Activated CD8-positive, alpha-beta T cell treated with anti-CD3 and anti-CD28 coated beads for 36 hours (primary cell): ENCODE measurements at regions of chr12 and their contacts with region 1.

Region 1: GRCh38 chr12:56152318-56153033 is at the start of gene MYL6B:
- DNase-seq: peak; percentile 98
- ATAC-seq: peak; percentile 88
- H3K4me3 Mint-ChIP-seq: peak within 1 kb of the TSS; percentile 92
- H3K27ac Mint-ChIP-seq: peak within 1 kb of the TSS; percentile 100
- H3K4me1 Mint-ChIP-seq: peaks cover 36% of the 10 kb centered on the region
- H3K27me3 Mint-ChIP-seq: no peaks in the 10 kb centered on the region
- CTCF ChIP-seq: no peak
- total RNA-seq, gene MYL6B: 60.3 to 66.9 TPM

Region 2: GRCh38 chr12:56127888-56128669 is 24.4 kb before region 1 on chr12 and contains the start of gene ESYT1:
- CTCF ChIA-PET with region 1: interaction called, 17 read pairs
- POLR2A ChIA-PET with region 1: interaction called, 20 read pairs
- intact Hi-C with region 1: no loop called
- DNase-seq: peak; percentile 99
- ATAC-seq: peak; percentile 92
- H3K4me3 Mint-ChIP-seq: peak within 1 kb of the TSS; percentile 84
- H3K27ac Mint-ChIP-seq: peak within 1 kb of the TSS; percentile 93
- H3K4me1 Mint-ChIP-seq: peaks cover 53% of the 10 kb centered on the region
- H3K27me3 Mint-ChIP-seq: no peaks in the 10 kb centered on the region
- CTCF ChIP-seq: no peak
- total RNA-seq, gene ESYT1: 154 to 160 TPM

Region 3: DNA sequence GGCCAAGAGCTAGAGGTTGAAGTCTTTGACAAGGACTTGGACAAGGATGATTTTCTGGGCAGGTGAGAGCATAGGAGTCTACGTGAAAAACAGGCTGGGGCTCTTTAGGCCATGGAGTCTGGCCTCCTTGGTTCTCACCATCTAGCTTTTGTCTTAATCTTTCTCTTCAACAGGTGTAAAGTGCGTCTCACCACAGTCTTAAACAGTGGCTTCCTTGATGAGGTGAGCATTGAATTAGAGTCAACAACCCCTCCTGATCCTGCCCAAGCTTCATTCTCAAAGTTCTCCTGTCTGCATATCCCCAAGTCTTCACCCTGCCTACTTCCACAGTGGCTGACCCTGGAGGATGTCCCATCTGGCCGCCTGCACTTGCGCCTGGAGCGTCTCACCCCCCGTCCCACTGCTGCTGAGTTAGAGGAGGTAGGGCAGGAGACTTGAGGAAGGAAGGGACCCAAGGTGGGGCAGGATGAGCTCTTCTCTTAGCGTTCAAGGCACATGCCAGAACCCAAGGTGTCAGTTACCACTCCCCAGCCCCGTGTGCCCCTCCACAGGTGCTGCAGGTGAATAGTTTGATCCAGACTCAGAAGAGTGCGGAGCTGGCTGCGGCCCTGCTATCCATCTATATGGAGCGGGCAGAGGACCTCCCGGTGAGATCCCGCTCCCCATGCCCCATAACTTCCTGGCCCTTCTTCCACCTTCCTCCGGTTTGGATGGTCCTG is 14.5 kb before region 1 on chr12:
- CTCF ChIA-PET with region 1: interaction called, 20 read pairs
- POLR2A ChIA-PET with region 1: interaction called, 12 read pairs
- intact Hi-C with region 1: no loop called
- DNase-seq: no peak
- ATAC-seq: peak; percentile 15
- H3K4me3 Mint-ChIP-seq: no peak overlapping the region
- H3K27ac Mint-ChIP-seq: peak overlapping the region; percentile 71
- H3K4me1 Mint-ChIP-seq: peaks cover 59% of the 10 kb centered on the region
- H3K27me3 Mint-ChIP-seq: no peaks in the 10 kb centered on the region
- CTCF ChIP-seq: no peak

Region 4: GRCh38 chr12:56198836-56199235 is 46.4 kb after region 1 on chr12:
- CTCF ChIA-PET with region 1: no interaction called
- POLR2A ChIA-PET with region 1: no interaction called
- intact Hi-C with region 1: no loop called
- DNase-seq: no peak
- ATAC-seq: no peak
- H3K4me3 Mint-ChIP-seq: no peak overlapping the region
- H3K27ac Mint-ChIP-seq: no peak overlapping the region
- H3K4me1 Mint-ChIP-seq: peaks cover 2% of the 10 kb centered on the region
- H3K27me3 Mint-ChIP-seq: no peaks in the 10 kb centered on the region
- CTCF ChIP-seq: no peak

Region 5: DNA sequence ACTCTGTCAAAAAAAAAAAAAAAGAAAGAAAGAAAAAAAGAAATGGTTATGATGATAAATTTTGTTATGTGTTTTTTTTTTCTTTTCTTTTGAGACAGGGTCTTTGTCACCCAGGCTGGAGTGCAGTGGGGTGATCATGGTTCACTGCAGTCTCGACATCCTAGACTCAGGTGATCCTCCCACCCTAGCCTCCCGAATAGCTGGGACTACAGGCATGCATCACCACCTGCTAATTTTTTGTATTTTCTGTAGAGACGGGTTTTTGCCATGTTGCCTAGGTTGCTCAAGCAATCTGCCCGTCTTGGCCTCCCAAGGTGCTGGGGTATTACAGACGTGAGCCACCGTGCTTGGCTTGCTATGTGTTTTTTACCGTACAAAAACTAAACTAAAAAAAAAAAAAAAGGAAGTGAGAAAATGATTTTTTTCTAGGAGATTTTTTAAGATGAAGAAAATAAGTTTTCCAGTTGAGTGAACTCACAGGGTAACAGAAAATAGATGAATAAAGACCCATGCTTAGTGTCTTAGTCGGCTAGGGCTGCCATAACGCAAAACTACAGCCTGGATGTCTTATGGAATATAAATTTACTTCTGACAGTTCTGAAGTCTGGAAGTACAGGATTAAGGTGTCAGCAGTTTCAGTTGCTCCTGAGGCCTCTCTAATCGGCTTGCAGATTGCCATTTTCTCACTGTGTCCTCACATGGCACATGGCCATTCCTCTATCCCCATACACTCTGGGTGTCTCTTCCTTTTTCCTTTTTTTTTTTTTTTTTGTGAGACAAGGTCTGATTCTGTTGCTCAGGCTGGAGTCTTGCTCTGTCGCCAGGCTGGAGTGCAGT is 223.3 kb after region 1 on chr12:
- CTCF ChIA-PET with region 1: no interaction called
- POLR2A ChIA-PET with region 1: no interaction called
- intact Hi-C with region 1: no loop called
- DNase-seq: no peak
- ATAC-seq: no peak
- H3K4me3 Mint-ChIP-seq: no peak overlapping the region
- H3K27ac Mint-ChIP-seq: no peak overlapping the region
- H3K4me1 Mint-ChIP-seq: no peaks in the 10 kb centered on the region
- H3K27me3 Mint-ChIP-seq: no peaks in the 10 kb centered on the region
- CTCF ChIP-seq: no peak